A549 (cell line): ENCODE measurements at regions of chr9 and their contacts with region 1.

Region 1: GRCh38 chr9:35553670-35554543 is 51.2 kb upstream of the TESK1 start:
- DNase-seq: peak; percentile 69 to 85
- ATAC-seq: peak; percentile 84 to 89
- H3K4me3 ChIP-seq: no peak overlapping the region; the same call in 2 of the 3 replicates
- H3K27ac ChIP-seq: peak overlapping the region; percentile 83 to 87
- H3K4me1 ChIP-seq: peaks cover 44% of the 10 kb centered on the region
- CTCF ChIP-seq: peak; percentile 98
- EP300 ChIP-seq: no peak
- POLR2A ChIP-seq: no peak
- RAD21 ChIP-seq: peak; percentile 98 to 99

Region 2: DNA sequence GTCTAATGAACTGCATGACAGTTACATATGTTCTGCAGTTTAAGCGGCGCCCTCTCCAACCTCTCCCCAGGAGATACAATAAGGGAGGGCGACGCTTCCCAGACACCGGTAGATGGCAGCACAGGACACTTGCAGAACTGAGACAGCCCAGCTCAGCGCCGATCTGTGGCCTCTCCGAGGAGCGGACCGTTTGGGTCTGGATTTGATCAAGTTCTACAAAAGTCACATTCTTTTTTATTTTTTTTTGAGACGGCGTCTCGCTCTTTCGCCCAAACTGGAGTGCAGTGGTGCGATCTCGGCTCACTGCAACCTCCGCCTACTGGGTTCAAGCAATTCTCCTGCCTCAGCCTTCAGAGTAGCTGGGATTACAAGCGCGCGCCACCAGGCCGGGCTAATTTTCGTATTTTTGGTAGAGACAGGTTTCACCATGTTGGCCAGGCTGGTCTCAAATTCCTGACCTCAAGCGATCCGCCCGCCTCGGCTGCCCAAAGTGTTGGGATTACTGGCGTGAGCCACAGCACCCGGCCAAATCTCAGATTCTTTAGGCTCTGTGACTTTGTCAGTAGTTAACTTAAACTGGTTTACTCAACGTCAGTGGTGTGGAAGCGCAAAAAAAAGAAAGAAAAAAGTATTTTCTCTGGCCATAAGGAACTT is 436.9 kb before region 1 on chr9:
- CTCF ChIA-PET with region 1: interaction called, 37 read pairs
- POLR2A ChIA-PET with region 1: interaction called, 6 read pairs
- DNase-seq: peak; percentile 90 to 93
- ATAC-seq: peak; percentile 65 to 83
- H3K4me3 ChIP-seq: peak overlapping the region; percentile 48
- H3K27ac ChIP-seq: peak overlapping the region; percentile 44 to 71; a peak in 4 of 6 replicates
- H3K4me1 ChIP-seq: peaks cover 27% of the 10 kb centered on the region
- CTCF ChIP-seq: peak; percentile 98
- EP300 ChIP-seq: no peak
- POLR2A ChIP-seq: no peak
- RAD21 ChIP-seq: peak; percentile 94 to 96

Region 3: GRCh38 chr9:35489313-35490154 is 64.4 kb before region 1 on chr9 and contains the start of gene RUSC2:
- CTCF ChIA-PET with region 1: interaction called, 87 read pairs
- POLR2A ChIA-PET with region 1: interaction called, 25 read pairs
- DNase-seq: peak; percentile 73 to 91
- ATAC-seq: peak; percentile 74 to 78
- H3K4me3 ChIP-seq: peak within 1 kb of the TSS; percentile 57
- H3K27ac ChIP-seq: peak within 1 kb of the TSS; percentile 96
- H3K4me1 ChIP-seq: peaks cover 34% of the 10 kb centered on the region
- CTCF ChIP-seq: peak; percentile 41; the same call in 2 of the 3 replicates
- EP300 ChIP-seq: peak in 1 of 2 experiments; percentile 27; a peak in 1 of 5 replicates
- POLR2A ChIP-seq: peak; percentile 36
- RAD21 ChIP-seq: peak; percentile 65 to 73
- polyA plus RNA-seq, gene RUSC2: 15.9 and 16.8 TPM in 2 replicates

Region 4: DNA sequence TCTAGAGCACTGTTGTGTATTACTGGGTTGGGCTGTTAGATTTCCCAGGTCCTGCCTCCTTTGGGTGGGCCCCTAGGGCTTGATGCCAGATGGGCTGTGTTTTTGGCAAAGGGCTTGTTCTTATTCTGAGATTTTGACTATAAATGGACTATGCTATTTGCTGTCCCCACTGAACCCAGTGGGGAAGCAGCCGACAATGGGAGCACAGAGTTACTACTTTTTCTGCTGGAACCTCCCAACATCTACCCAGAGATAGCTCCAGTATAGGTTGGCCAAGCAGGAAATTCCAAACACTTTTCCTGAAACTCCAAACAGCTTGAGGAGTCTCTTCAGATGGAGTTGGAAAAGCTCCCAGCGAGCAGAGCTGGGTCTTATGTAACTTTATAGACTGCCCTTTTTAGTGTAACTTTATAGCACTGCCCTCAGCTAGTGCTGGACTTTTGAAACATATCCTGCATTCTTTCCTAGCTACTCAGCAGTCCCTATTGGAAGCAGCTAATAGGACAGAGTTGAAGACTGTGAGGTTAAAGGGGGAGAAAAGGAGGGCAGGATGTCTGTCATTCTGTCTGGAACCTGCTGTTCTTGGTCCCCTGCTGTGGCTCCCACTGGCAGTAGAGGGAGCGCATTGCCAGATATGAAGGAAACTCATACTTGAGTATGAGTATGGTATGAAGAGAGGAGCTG is 43.0 kb before region 1 on chr9:
- CTCF ChIA-PET with region 1: interaction called, 146 read pairs
- POLR2A ChIA-PET with region 1: interaction called, 12 read pairs
- DNase-seq: peak; percentile 79 to 97
- ATAC-seq: peak; percentile 95 to 96
- H3K4me3 ChIP-seq: peak overlapping the region; percentile 8; the same call in 2 of the 3 replicates
- H3K27ac ChIP-seq: peak overlapping the region; percentile 95 to 96
- H3K4me1 ChIP-seq: peaks cover 78% of the 10 kb centered on the region
- CTCF ChIP-seq: peak; percentile 40
- EP300 ChIP-seq: peak; percentile 91 to 97; a peak in 4 of 5 replicates
- POLR2A ChIP-seq: no peak
- RAD21 ChIP-seq: peak; percentile 60 to 71

Region 5: GRCh38 chr9:35526087-35526801 is 27.7 kb before region 1 on chr9:
- CTCF ChIA-PET with region 1: interaction called, 146 read pairs
- POLR2A ChIA-PET with region 1: no interaction called
- DNase-seq: peak in 1 of 2 experiments; percentile 84
- ATAC-seq: peak; percentile 78 to 82
- H3K4me3 ChIP-seq: no peak overlapping the region; the same call in 2 of the 3 replicates
- H3K27ac ChIP-seq: peak overlapping the region; percentile 95 to 96
- H3K4me1 ChIP-seq: peaks cover 85% of the 10 kb centered on the region
- CTCF ChIP-seq: no peak
- EP300 ChIP-seq: peak; percentile 99 to 100
- POLR2A ChIP-seq: no peak
- RAD21 ChIP-seq: peak; percentile 8 to 37

Region 6: GRCh38 chr9:35569206-35569605 is 15.3 kb after region 1 on chr9:
- CTCF ChIA-PET with region 1: interaction called, 59 read pairs
- POLR2A ChIA-PET with region 1: no interaction called
- DNase-seq: no peak
- ATAC-seq: no peak; a peak in 1 of 6 replicates
- H3K4me3 ChIP-seq: no peak overlapping the region
- H3K27ac ChIP-seq: no peak overlapping the region
- H3K4me1 ChIP-seq: no peaks in the 10 kb centered on the region
- CTCF ChIP-seq: no peak
- EP300 ChIP-seq: no peak
- POLR2A ChIP-seq: no peak
- RAD21 ChIP-seq: no peak

Region 7: GRCh38 chr9:35616681-35617459 is 63.0 kb after region 1 on chr9:
- CTCF ChIA-PET with region 1: no interaction called
- POLR2A ChIA-PET with region 1: no interaction called
- DNase-seq: no peak
- ATAC-seq: peak in 1 of 2 experiments; percentile 52; a peak in 3 of 6 replicates
- H3K4me3 ChIP-seq: no peak overlapping the region
- H3K27ac ChIP-seq: no peak overlapping the region
- H3K4me1 ChIP-seq: no peaks in the 10 kb centered on the region
- CTCF ChIP-seq: no peak
- EP300 ChIP-seq: no peak
- POLR2A ChIP-seq: no peak
- RAD21 ChIP-seq: no peak